ENCODE measurements at regions of chr7 and their contacts with region 1.

Region 1: GRCh38 chr7:121366852-121367431 is 29.2 kb downstream of the FAM3C start:
- DNase-seq: peak in 2 of 7 donors; percentile 13 to 30
- H3K4me3 ChIP-seq: no peak overlapping the region
- H3K27ac ChIP-seq: no peak overlapping the region
- H3K4me1 ChIP-seq: peaks cover 0 to 5% of the 10 kb centered on the region in 2 donors
- H3K27me3 ChIP-seq: no peaks in the 10 kb centered on the region
- CTCF ChIP-seq: peak; percentile 59 to 89 (median 78)
- POLR2A ChIP-seq: no peak

Region 2: DNA sequence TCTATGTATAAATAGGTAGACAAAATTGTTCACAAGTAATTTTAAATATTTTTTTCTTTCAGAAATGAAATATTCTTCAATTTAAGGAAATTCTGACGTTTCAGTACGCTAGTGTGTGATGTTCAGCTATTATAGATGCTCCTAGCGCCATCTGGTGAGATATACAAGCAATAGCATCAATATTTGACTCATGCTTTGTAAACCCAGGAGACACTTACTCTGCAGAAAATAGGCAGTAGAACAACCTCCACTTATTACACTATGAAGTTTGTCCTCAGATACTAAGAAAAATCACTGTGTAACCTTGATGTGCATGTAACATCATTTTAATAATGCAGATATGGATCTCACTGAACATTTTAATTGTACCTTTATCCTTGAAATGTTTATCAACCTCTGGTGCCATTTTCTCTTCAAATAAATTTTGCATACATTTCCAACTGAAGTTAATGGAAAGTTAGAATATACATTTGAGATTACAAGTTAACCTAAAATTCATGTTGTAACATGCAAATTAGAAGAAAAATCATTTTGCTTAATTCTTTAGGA is 180.7 kb after region 1 on chr7:
- intact Hi-C with region 1: loop called (anchors 5 to 10 kb)
- DNase-seq: peak in 2 of 7 donors; percentile 4 to 15
- H3K4me3 ChIP-seq: no peak overlapping the region
- H3K27ac ChIP-seq: no peak overlapping the region
- H3K4me1 ChIP-seq: peaks cover 0 to 12% of the 10 kb centered on the region in 2 donors
- H3K27me3 ChIP-seq: no peaks in the 10 kb centered on the region
- CTCF ChIP-seq: peak; percentile 47 to 86 (median 78)
- POLR2A ChIP-seq: no peak